MCF 10A (cell line): ENCODE measurements at regions of chr15 and their contacts with region 1.

Region 1: GRCh38 chr15:78241007-78241406 is 6.6 kb upstream of the ACSBG1 start:
- DNase-seq: peak; percentile 79
- H3K4me3 Mint-ChIP-seq: no peak overlapping the region
- H3K27ac Mint-ChIP-seq: no peak overlapping the region
- H3K4me1 Mint-ChIP-seq: peaks cover 5% of the 10 kb centered on the region
- H3K27me3 Mint-ChIP-seq: no peaks in the 10 kb centered on the region
- CTCF ChIP-seq: peak; percentile 92

Region 2: GRCh38 chr15:77966540-77967290 is 274.3 kb before region 1 on chr15:
- CTCF ChIA-PET with region 1: interaction called, 12 read pairs
- POLR2A ChIA-PET with region 1: no interaction called
- intact Hi-C with region 1: loop called (anchors 5 kb)
- DNase-seq: peak; percentile 61
- H3K4me3 Mint-ChIP-seq: no peak overlapping the region
- H3K27ac Mint-ChIP-seq: no peak overlapping the region
- H3K4me1 Mint-ChIP-seq: peaks cover 3% of the 10 kb centered on the region
- H3K27me3 Mint-ChIP-seq: peaks cover 20% of the 10 kb centered on the region
- CTCF ChIP-seq: peak; percentile 91

Region 3: DNA sequence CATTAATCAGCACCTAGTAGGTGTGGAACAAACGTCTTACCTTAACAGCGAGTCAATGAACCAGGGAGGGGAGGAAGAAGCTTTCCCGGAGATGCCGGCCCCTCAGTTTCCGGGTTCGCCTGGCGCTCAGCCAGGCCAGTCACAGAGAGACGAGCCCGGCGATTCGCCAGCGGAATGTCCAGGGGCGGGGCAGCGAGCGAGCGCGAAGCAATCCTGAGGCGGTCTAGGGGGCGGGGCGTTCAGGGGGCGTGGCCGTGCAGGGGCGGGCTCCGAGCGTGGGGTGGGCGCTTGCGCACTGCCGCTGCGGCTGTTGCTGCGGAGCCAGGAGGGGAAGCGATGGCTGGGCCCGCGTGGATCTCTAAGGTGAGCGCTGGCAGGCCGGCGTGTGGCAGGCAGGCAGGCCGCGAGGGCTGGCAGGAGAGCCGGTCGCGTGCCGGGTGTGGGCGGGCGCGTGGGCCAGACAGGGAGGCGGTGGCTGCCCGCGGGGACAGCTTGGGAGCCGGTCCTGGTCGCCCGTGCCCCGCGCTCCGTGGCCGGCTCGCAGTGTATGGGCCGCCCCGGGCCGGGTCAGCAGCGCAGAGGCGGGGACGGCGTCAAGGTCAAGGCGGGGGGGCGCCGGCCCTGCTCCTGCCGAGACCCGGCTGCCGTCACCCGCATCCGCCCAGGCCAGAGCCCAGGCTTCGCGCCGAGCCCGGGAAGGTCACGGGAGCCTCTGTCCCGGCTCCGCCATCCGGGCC is 91.8 kb before region 1 on chr15 and contains the start of gene IDH3A:
- CTCF ChIA-PET with region 1: interaction called, 10 read pairs
- POLR2A ChIA-PET with region 1: interaction called, 4 read pairs
- intact Hi-C with region 1: no loop called
- DNase-seq: peak; percentile 97
- H3K4me3 Mint-ChIP-seq: peak within 1 kb of the TSS; percentile 92
- H3K27ac Mint-ChIP-seq: peak within 1 kb of the TSS; percentile 90
- H3K4me1 Mint-ChIP-seq: peaks cover 35% of the 10 kb centered on the region
- H3K27me3 Mint-ChIP-seq: no peaks in the 10 kb centered on the region
- CTCF ChIP-seq: no peak
- total RNA-seq, gene IDH3A: 100.0 and 106 TPM in 2 replicates

Region 4: GRCh38 chr15:78177447-78177873 is 63.5 kb before region 1 on chr15:
- CTCF ChIA-PET with region 1: interaction called, 110 read pairs
- POLR2A ChIA-PET with region 1: interaction called, 5 read pairs
- intact Hi-C with region 1: loop called (anchors 1 kb)
- DNase-seq: peak; percentile 52
- H3K4me3 Mint-ChIP-seq: no peak overlapping the region
- H3K27ac Mint-ChIP-seq: no peak overlapping the region
- H3K4me1 Mint-ChIP-seq: no peaks in the 10 kb centered on the region
- H3K27me3 Mint-ChIP-seq: no peaks in the 10 kb centered on the region
- CTCF ChIP-seq: peak; percentile 73

Region 5: DNA sequence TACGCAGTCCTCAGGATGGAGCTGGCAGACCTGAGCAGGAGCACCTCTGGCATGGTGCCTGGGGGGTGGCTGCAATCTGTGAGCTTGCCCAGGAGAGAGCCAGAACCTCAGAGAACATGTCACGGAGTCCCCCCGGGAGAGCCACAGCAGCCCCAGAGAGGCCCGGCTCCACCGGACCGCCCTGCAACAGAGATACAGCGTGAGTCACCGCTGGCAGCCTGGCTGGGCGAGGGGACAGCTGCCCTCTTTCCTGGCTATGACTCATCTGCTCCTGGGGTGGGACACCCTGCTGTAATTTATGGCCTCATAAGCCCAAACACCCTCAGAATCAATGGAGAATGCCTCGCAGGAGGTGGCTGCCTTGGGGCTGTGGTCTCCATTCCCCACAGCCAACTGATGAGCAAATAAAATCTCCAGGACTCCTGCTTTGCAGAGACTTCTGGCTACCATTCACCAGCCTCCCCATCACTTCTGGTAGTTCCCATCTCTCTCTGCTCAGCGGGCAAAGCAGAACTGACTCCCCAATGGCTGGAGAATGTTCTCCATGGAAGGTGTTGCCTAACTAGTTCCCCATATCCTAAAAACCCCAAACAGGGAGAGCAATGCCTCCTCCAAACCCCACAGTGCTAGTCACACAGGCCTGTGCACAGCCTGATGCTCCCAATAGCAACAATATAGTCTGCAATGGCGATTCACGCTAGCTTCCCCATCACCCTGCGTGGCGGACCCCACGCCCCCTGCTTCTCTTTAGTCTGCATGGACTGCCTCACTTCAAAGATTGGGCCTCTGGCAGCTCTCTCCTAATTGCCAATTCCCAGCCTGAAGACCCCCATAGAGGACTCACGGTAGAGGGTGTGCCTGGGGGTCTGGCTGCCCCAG is 28.2 kb before region 1 on chr15:
- CTCF ChIA-PET with region 1: interaction called, 12 read pairs
- POLR2A ChIA-PET with region 1: no interaction called
- intact Hi-C with region 1: no loop called
- DNase-seq: peak; percentile 85
- H3K4me3 Mint-ChIP-seq: no peak overlapping the region
- H3K27ac Mint-ChIP-seq: no peak overlapping the region
- H3K4me1 Mint-ChIP-seq: peaks cover 40% of the 10 kb centered on the region
- H3K27me3 Mint-ChIP-seq: no peaks in the 10 kb centered on the region
- CTCF ChIP-seq: no peak